Heart right ventricle (tissue), 16 donors: ENCODE measurements at regions of chr3 and their contacts with region 1.

Region 1: GRCh38 chr3:146390957-146391356 is 78.4 kb downstream of the PLSCR2 start:
- DNase-seq: peak in 1 of 2 donors; percentile 55
- ATAC-seq: peak; percentile 50 to 93 (median 84)
- H3K4me3 ChIP-seq: no peak overlapping the region
- H3K27ac ChIP-seq: peak overlapping the region in 6 of 10 donors; percentile 24 to 56 (median 38)
- H3K4me1 ChIP-seq: peaks cover 4 to 17% (median 9%) of the 10 kb centered on the region in 9 donors
- H3K27me3 ChIP-seq: no peaks in the 10 kb centered on the region
- CTCF ChIP-seq: no peak

Region 2: GRCh38 chr3:145798692-145799537 is 592.0 kb before region 1 on chr3:
- intact Hi-C with region 1: loop called in 1 of 10 experiments (anchors 10 kb)
- DNase-seq: no peak
- ATAC-seq: no peak
- H3K4me3 ChIP-seq: no peak overlapping the region
- H3K27ac ChIP-seq: no peak overlapping the region
- H3K4me1 ChIP-seq: no peaks in the 10 kb centered on the region
- H3K27me3 ChIP-seq: no peaks in the 10 kb centered on the region
- CTCF ChIP-seq: no peak

Region 3: DNA sequence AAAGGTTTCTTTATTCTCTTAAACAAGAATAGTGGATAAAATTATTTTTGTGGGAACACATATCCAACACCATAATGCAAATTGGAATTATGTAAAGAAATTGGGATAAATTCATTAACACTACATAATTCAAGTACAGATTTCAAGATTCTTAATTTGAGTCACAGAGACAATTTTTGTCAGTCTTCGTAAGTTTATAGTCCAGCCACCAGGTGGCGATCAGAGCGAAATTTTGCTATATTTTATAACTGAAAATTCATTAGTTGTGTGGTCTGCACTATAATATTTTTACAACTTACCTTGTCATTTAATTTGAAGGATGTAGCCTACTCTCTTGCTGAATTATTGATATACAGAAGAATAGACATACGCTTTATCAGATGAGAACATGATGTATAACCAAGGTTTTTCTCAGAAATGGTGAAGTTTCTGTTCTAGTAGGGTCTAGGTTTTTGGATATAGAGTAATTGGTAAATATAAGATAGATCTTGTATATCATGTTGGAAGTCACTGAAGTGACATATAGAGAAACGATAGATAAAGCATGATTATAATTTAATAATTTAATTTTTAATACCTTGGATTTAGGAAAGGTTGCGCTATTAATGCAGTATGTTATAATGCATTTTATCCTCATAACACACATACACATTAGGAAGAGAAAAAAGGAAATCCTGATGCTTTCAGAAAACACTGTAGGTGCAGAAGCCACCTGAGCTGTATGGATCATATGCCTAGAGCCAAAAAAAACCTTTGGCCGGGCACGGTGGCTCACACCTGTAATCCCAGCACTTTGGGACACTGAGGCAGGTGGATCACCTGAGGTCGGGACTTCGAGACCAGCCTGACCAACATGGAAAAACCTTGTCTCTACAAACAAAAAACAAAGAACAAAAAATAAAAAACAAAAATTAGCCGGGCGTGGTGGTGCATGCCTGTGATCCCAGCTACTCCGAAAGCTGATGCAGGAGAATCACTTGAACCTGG is 171.8 kb before region 1 on chr3:
- intact Hi-C with region 1: no loop called
- DNase-seq: peak; percentile 17 to 30
- ATAC-seq: no peak
- H3K4me3 ChIP-seq: no peak overlapping the region
- H3K27ac ChIP-seq: no peak overlapping the region
- H3K4me1 ChIP-seq: peaks cover 0 to 29% (median 11%) of the 10 kb centered on the region in 9 donors
- H3K27me3 ChIP-seq: no peaks in the 10 kb centered on the region
- CTCF ChIP-seq: peak; percentile 59 to 85 (median 77)

Region 4: GRCh38 chr3:146233487-146233886 is 157.5 kb before region 1 on chr3:
- intact Hi-C with region 1: no loop called
- DNase-seq: no peak
- ATAC-seq: no peak
- H3K4me3 ChIP-seq: no peak overlapping the region
- H3K27ac ChIP-seq: no peak overlapping the region
- H3K4me1 ChIP-seq: no peaks in the 10 kb centered on the region
- H3K27me3 ChIP-seq: no peaks in the 10 kb centered on the region
- CTCF ChIP-seq: no peak